ENCODE measurements at regions of chr11 and their contacts with region 1.

Region 1: GRCh38 chr11:128421577-128421976 is 165.8 kb downstream of the ETS1 start:
- DNase-seq: peak; percentile 28
- H3K4me3 ChIP-seq: no peak overlapping the region
- H3K27ac ChIP-seq: peak overlapping the region; percentile 60 to 98
- H3K4me1 ChIP-seq: peaks cover 22 to 56% of the 10 kb centered on the region in 2 experiments; a peak in 3 of 4 replicates
- H3K27me3 ChIP-seq: no peaks in the 10 kb centered on the region
- CTCF ChIP-seq: no peak
- EP300 ChIP-seq: 0 out of 4 replicates have a peak, but pooled peaks of 1 of the 2 experiments have one; percentile 2
- RAD21 ChIP-seq: no peak

Region 2: GRCh38 chr11:128232588-128232987 is 189.0 kb before region 1 on chr11:
- CTCF ChIA-PET with region 1: no interaction called
- POLR2A ChIA-PET with region 1: no interaction called
- DNase-seq: no peak
- H3K4me3 ChIP-seq: no peak overlapping the region
- H3K27ac ChIP-seq: no peak overlapping the region; a peak in 1 of 4 replicates
- H3K4me1 ChIP-seq: peaks cover 9 to 18% of the 10 kb centered on the region in 2 experiments; a peak in 3 of 4 replicates
- H3K27me3 ChIP-seq: no peaks in the 10 kb centered on the region
- CTCF ChIP-seq: no peak
- EP300 ChIP-seq: no peak
- RAD21 ChIP-seq: no peak

Region 3: DNA sequence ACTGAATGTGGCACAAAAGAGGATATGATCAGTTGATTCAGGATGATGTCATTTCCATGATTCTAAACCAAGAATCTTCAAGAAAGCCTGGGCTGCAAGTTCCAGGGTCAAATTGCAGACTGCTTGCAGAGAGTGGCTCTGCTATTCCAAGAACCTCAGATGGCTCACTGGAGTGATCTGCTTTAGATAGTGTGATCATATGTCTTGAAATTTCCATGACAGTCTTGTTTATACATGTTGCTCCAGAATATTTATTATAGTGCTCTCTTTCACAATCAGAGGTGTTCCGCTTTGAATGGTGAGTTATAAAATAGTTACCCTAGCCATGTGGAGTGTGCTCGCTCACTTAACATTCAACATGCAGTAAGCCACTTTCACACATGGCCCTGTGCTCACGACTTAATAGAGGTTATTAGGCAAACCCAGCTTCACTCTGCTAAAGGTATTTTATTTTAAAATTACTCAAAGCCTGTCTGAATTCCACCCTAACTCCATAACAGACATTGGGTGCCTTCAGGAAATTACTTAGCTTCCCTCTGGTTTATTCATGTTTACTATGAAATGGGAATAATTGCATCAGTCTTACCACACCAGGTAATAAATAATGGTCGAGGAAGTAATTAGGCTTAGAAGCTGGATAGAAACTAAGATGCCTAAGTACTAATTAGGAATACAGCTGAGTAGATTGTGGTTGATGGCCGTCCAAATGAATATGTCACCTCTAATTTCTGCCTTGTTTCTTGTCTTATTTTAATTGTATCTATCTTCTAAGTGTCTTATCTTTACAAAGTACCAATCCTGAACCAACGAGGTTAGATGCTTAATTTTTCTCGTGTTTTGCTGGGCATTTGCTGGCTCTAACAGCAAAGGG is 22.1 kb before region 1 on chr11:
- CTCF ChIA-PET with region 1: interaction called, 10 read pairs
- POLR2A ChIA-PET with region 1: interaction called, 5 read pairs
- DNase-seq: no peak
- H3K4me3 ChIP-seq: no peak overlapping the region
- H3K27ac ChIP-seq: peak overlapping the region; percentile 93 to 94
- H3K4me1 ChIP-seq: peaks cover 13 to 35% of the 10 kb centered on the region in 2 experiments
- H3K27me3 ChIP-seq: no peaks in the 10 kb centered on the region
- CTCF ChIP-seq: no peak
- EP300 ChIP-seq: peak in 1 of 2 experiments; percentile 78; a peak in 2 of 4 replicates
- RAD21 ChIP-seq: no peak